Sigmoid colon (tissue), 7 donors: ENCODE measurements at regions of chr2 and their contacts with region 1.

Region 1: DNA sequence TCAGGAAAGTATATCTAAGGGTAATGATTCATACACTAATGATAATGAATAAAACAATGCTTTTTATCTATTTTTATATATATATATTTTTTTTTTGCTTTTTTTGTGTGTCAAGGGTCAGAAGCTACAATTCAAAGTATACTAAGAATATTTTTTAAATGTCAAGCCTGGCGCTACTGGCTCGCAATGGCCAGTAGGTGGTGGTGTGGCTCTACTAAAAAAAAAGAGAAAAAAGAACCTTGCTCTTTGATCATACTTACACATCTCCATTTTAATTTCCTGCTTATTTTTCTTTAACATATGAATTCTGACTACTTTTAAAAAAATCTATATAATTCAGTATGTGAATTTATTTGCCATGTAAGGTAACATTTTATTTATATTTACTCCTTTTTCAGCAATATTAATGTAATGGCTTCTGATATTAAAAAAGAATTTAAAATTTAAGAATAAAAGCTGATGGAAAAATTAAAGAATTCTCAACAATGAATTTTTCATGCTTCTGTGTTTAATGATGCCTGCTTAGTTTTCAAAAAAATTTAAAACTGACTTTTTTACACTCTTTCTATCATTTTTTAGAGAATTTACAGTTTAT is 232.9 kb downstream of the GULP1 start:
- DNase-seq: no peak
- H3K4me3 ChIP-seq: no peak overlapping the region
- H3K27ac ChIP-seq: peak overlapping the region in 2 of 4 donors; percentile 69 to 73
- H3K4me1 ChIP-seq: peaks cover 0 to 53% (median 31%) of the 10 kb centered on the region in 4 donors
- H3K27me3 ChIP-seq: no peaks in the 10 kb centered on the region
- CTCF ChIP-seq: peak; percentile 15 to 83 (median 45)
- EP300 ChIP-seq: no peak
- POLR2A ChIP-seq: no peak

Region 2: GRCh38 chr2:187934692-187935091 is 589.9 kb before region 1 on chr2:
- intact Hi-C with region 1: no loop called
- DNase-seq: no peak
- H3K4me3 ChIP-seq: no peak overlapping the region
- H3K27ac ChIP-seq: no peak overlapping the region
- H3K4me1 ChIP-seq: no peaks in the 10 kb centered on the region
- H3K27me3 ChIP-seq: no peaks in the 10 kb centered on the region
- CTCF ChIP-seq: no peak
- EP300 ChIP-seq: no peak
- POLR2A ChIP-seq: no peak

Region 3: GRCh38 chr2:188588235-188588634 is 63.6 kb after region 1 on chr2:
- intact Hi-C with region 1: no loop called
- DNase-seq: no peak
- H3K4me3 ChIP-seq: no peak overlapping the region
- H3K27ac ChIP-seq: no peak overlapping the region
- H3K4me1 ChIP-seq: no peaks in the 10 kb centered on the region
- H3K27me3 ChIP-seq: no peaks in the 10 kb centered on the region
- CTCF ChIP-seq: no peak
- EP300 ChIP-seq: no peak
- POLR2A ChIP-seq: no peak

Region 4: GRCh38 chr2:188598551-188598950 is 73.9 kb after region 1 on chr2:
- intact Hi-C with region 1: no loop called
- DNase-seq: no peak
- H3K4me3 ChIP-seq: no peak overlapping the region
- H3K27ac ChIP-seq: peak overlapping the region in 1 of 4 donors; percentile 38
- H3K4me1 ChIP-seq: peaks cover 0 to 17% (median 11%) of the 10 kb centered on the region in 4 donors
- H3K27me3 ChIP-seq: no peaks in the 10 kb centered on the region
- CTCF ChIP-seq: no peak
- EP300 ChIP-seq: no peak
- POLR2A ChIP-seq: no peak

Region 5: GRCh38 chr2:188983427-188984064 is 458.9 kb after region 1 on chr2:
- intact Hi-C with region 1: loop called (anchors 2 kb)
- DNase-seq: no peak
- H3K4me3 ChIP-seq: peak overlapping the region in 1 of 4 donors; percentile 0
- H3K27ac ChIP-seq: peak overlapping the region; percentile 57 to 91 (median 76)
- H3K4me1 ChIP-seq: peaks cover 0 to 84% (median 50%) of the 10 kb centered on the region in 4 donors
- H3K27me3 ChIP-seq: no peaks in the 10 kb centered on the region
- CTCF ChIP-seq: peak in 3 of 4 experiments; percentile 20 to 49 (median 43)
- EP300 ChIP-seq: no peak
- POLR2A ChIP-seq: no peak